ENCODE measurements at regions of chr7 and their contacts with region 1.

Region 1: DNA sequence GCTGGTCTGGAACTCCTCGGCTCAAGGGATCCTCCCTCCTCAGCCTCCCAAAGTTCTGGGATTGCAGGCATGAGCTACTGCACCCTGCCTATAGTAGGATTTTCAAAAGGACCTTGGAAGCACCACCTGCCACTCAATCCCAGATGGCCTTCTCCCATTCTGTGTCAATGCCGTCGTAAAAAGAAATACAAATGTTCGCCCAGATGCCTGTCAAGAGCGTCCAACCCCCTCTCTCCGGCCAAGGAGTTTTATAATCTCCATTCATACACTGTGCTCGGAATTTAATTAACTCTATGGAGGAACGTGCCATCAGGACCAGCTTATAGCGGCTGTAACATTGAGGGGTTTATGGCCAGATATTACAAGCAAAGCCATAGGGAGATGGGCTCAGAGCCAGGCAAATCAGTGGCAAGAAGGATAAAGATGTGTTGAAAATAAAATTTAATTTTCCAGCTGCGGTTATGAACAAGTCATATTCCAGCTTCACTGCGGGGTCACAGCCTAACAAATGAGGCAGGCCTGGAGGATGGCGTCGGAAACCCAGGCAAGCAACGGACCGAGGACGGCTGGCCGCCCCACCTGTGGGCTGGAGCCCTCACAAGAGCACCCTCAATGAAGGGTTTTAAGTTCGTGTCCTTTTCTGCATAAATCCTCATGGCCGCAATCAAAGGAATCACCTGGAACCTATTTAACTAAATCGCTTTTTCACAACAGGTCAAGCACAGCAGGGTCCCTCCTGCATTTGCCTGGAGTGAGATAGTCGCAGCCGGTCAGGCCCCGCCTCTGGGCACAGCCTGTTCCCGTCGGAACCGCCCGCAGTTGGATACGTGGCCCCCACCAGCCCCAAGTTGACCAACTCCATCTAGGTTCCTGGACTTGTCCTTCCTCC is 374.5 kb upstream of the FOXK1 start:
- DNase-seq: no peak
- H3K4me3 ChIP-seq: no peak overlapping the region
- H3K27ac ChIP-seq: no peak overlapping the region
- H3K4me1 ChIP-seq: no peaks in the 10 kb centered on the region
- H3K27me3 ChIP-seq: no peaks in the 10 kb centered on the region
- CTCF ChIP-seq: no peak

Region 2: GRCh38 chr7:4245236-4246137 is 62.1 kb before region 1 on chr7:
- CTCF ChIA-PET with region 1: no interaction called
- dilution Hi-C with region 1: loop called (anchors 5 kb)
- in situ Hi-C with region 1: no loop called
- intact Hi-C with region 1: no loop called
- DNase-seq: peak; percentile 45
- H3K4me3 ChIP-seq: no peak overlapping the region
- H3K27ac ChIP-seq: no peak overlapping the region
- H3K4me1 ChIP-seq: no peaks in the 10 kb centered on the region
- H3K27me3 ChIP-seq: no peaks in the 10 kb centered on the region
- CTCF ChIP-seq: no peak

Measured in mammary epithelial cell (primary cell).